Activated CD4-positive, alpha-beta T cell treated with anti-CD3 and anti-CD28 coated beads for 36 hours (primary cell): ENCODE measurements at regions of chr19 and their contacts with region 1.

Region 1: DNA sequence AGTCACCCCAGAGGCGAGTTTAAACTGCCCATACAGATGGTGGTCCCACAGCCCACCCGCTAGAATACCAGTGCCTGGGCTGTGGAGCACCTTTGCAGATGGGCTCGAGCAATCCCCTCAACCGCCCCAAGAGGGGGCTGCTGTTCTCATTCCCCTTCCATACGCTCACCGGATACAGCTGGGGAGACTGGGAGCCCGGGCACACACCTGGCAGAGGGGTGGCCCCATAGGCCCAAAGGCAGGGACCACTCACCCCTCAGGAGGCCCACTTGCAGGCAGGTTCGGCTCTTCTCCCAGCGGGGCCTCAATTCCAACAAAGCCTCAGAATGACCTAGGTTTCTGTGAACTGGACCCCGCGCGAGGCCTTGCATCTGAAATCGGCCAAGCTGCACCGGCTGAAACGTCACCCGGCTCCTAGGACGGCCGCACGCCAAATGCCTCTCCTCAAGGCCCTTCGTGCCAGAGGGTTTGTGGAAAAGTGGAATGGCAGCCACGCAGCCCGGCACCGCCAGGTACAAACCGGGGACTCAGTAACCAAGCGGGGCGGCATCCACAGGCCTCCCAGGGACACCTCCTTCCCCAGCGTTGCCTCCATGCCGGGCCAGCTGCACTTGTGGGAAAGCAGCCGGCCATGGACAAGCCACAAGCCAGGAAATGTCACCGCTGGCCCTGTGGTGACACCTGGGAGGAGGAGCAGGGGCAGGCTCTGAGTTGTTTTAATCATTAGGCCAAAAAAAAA is 18.7 kb downstream of the MLLT1 start:
- DNase-seq: peak; percentile 60
- ATAC-seq: peak; percentile 85
- H3K4me3 Mint-ChIP-seq: no peak overlapping the region
- H3K27ac Mint-ChIP-seq: no peak overlapping the region
- H3K4me1 Mint-ChIP-seq: peaks cover 6% of the 10 kb centered on the region
- H3K27me3 Mint-ChIP-seq: no peaks in the 10 kb centered on the region

Region 2: DNA sequence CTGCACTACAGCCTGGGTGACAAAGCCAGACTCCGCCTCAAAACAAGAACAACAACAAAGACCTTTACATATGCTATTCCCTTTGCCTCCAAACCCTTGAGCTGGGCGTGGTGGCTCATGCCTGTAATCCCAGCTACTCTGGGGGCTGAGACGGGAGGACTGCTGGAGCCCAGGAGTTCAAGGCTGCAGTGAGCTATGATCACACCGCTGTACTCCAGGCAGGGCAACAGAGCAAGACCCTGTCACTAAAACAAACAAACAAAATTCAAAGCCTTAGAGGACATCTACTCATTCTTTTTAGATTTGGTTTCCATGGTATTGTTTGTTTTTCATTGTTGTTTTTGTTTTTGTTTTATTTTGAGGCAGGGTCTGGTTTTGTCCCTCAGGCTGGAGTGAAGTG is 64.5 kb after region 1 on chr19:
- CTCF ChIA-PET with region 1: no interaction called
- POLR2A ChIA-PET with region 1: no interaction called
- intact Hi-C with region 1: loop called in 1 of 2 experiments (anchors 10 kb)
- DNase-seq: no peak
- ATAC-seq: no peak
- H3K4me3 Mint-ChIP-seq: no peak overlapping the region
- H3K27ac Mint-ChIP-seq: no peak overlapping the region
- H3K4me1 Mint-ChIP-seq: peaks cover 2% of the 10 kb centered on the region
- H3K27me3 Mint-ChIP-seq: no peaks in the 10 kb centered on the region